Activated naive CD4-positive, alpha-beta T cell treated with anti-CD3 and anti-CD28 coated beads for 36 hours (primary cell): ENCODE measurements at regions of chr16 and their contacts with region 1.

Region 1: DNA sequence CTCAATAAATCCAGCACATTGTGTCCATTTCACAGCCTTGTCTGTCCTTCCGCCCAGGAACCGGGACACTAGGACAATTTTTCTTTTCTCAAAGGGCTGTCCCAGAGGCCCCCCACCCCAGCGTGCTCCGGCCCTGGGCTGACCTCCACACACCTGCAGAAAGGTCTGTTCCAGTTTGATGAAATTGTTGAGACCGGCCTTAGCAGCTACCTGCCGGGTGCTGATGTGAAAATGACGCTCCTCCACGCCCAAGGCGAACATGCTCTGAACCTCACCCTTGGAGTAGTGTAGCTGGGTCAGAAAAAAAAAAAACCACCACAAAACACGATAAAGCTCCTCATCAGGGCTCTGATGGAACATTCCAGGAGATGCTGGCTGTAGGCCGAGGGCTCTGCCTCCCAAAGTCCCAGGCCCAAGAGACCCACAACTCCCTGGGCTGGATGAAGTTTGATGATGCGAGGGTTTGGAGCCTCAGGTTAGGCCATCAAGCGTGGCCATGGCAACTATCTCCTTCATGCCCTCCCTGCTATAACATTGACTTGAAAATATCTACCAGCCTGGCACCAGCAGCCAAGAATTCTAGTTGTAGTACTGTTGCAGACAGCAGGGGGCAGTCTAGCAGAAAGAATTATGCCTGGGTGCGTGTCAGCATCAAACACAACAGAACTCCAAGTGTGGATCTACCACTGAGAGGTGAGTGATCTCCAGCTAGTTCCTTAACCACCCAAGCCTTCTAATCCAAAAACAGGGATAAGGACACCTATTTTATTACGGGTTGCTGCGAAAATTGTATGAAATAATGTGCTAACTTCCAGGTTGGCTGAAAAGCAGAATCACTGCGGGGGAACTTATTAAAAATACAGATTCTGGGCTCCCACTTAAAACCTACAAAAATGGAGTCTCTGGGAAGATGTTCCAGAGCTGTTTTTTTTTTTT is 62.1 kb downstream of the RMI2 start:
- DNase-seq: peak; percentile 86
- H3K4me3 Mint-ChIP-seq: no peak overlapping the region
- H3K27ac Mint-ChIP-seq: no peak overlapping the region
- H3K4me1 Mint-ChIP-seq: peaks cover 2% of the 10 kb centered on the region
- H3K27me3 Mint-ChIP-seq: no peaks in the 10 kb centered on the region

Region 2: DNA sequence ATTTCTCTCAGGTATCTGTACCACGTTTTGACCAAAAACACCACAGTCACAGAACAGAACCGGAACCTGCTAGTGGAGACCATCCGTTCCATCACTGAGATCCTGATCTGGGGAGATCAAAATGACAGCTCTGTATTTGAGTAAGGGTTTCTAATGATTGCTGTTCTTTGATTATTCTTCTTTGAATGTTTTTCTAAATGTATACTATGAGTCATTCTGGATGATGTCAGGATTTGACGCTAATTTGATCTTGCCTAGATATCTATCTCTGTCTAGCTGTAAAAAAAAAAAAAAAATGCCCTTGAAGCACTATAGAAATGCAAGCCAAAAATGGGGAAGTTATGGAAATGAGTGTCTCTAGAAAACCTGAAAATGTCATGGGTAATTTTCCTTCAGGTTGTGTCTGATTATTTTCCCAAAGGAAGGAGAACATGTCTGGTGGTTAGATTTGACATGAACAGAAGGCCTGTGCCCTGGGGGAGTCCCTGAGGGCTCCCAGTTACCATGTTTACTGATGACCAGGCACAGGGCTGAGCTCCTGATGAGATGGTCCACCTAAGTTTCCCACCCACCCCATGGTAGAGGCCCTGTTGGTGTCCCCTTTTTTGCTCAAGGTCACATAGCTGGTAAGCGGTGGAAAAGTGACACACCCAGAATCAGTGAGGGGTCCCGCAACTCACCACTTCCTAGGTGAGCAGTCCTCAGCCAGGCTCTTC is 449.4 kb before region 1 on chr16:
- CTCF ChIA-PET with region 1: interaction called, 37 read pairs
- intact Hi-C with region 1: loop called (anchors 1 kb)
- DNase-seq: peak; percentile 57
- H3K4me3 Mint-ChIP-seq: no peak overlapping the region
- H3K27ac Mint-ChIP-seq: peak overlapping the region; percentile 82
- H3K4me1 Mint-ChIP-seq: peaks cover 37% of the 10 kb centered on the region
- H3K27me3 Mint-ChIP-seq: no peaks in the 10 kb centered on the region

Region 3: DNA sequence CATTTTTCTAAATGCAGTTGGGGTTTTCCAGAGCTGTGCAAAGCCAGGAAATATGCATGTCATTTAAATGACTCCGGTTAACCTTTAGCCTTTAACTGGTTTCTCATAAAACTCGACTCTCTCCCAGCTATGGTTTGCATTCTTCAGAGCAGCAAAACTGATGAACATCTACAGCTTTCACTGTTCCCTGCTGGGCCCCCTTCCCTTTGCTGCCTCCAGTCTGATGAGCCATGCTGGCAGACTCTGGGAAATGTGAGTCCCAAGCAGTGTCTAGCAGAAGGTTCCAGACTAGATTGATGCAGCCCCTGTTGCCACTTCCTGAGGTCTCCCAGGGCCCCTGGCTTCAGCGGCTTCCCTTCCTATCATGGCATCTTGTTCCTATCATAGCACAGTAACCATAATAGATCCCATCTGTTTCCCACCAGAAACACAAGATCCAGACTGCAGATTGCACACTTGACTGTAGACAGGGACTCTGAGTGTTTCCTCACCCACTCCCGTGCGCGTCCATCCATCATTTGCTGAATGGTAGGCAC is 327.6 kb before region 1 on chr16:
- CTCF ChIA-PET with region 1: no interaction called
- intact Hi-C with region 1: no loop called
- DNase-seq: peak; percentile 74
- H3K4me3 Mint-ChIP-seq: peak overlapping the region; percentile 36
- H3K27ac Mint-ChIP-seq: peak overlapping the region; percentile 96
- H3K4me1 Mint-ChIP-seq: peaks cover 61% of the 10 kb centered on the region
- H3K27me3 Mint-ChIP-seq: no peaks in the 10 kb centered on the region

Region 4: GRCh38 chr16:11297492-11298142 is 109.7 kb before region 1 on chr16:
- CTCF ChIA-PET with region 1: no interaction called
- intact Hi-C with region 1: no loop called
- DNase-seq: peak; percentile 78
- H3K4me3 Mint-ChIP-seq: peak overlapping the region; percentile 49
- H3K27ac Mint-ChIP-seq: peak overlapping the region; percentile 0
- H3K4me1 Mint-ChIP-seq: peaks cover 27% of the 10 kb centered on the region
- H3K27me3 Mint-ChIP-seq: no peaks in the 10 kb centered on the region

Region 5: GRCh38 chr16:11396241-11397048 is 10.9 kb before region 1 on chr16:
- CTCF ChIA-PET with region 1: interaction called, 52 read pairs
- intact Hi-C with region 1: no loop called
- DNase-seq: peak; percentile 77
- H3K4me3 Mint-ChIP-seq: no peak overlapping the region
- H3K27ac Mint-ChIP-seq: no peak overlapping the region
- H3K4me1 Mint-ChIP-seq: no peaks in the 10 kb centered on the region
- H3K27me3 Mint-ChIP-seq: no peaks in the 10 kb centered on the region

Region 6: GRCh38 chr16:11431915-11432465 is 24.7 kb after region 1 on chr16:
- CTCF ChIA-PET with region 1: interaction called, 13 read pairs
- intact Hi-C with region 1: no loop called
- DNase-seq: no peak
- H3K4me3 Mint-ChIP-seq: no peak overlapping the region
- H3K27ac Mint-ChIP-seq: no peak overlapping the region
- H3K4me1 Mint-ChIP-seq: no peaks in the 10 kb centered on the region
- H3K27me3 Mint-ChIP-seq: no peaks in the 10 kb centered on the region

Region 7: DNA sequence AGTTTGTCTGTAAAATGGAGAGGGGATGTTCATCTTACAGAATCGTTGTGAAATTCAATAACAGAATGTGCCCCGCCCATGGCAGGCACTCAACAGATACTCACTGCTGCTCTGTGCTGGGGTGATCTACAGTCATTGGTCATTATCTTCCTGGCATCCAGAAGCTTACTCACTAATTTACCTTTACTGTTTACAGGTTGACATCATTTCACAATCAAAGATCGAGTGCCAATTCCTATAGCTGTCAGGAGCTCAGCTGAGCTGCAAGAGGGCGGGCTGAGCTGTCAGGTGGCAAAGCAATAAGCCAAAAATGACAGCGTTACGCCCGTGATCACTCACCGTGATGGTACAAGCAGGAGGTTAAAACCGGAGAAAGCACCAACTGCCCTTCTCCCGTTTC is 128.2 kb after region 1 on chr16:
- CTCF ChIA-PET with region 1: interaction called, 26 read pairs
- intact Hi-C with region 1: loop called (anchors 1 kb)
- DNase-seq: no peak
- H3K4me3 Mint-ChIP-seq: no peak overlapping the region
- H3K27ac Mint-ChIP-seq: no peak overlapping the region
- H3K4me1 Mint-ChIP-seq: peaks cover 13% of the 10 kb centered on the region
- H3K27me3 Mint-ChIP-seq: no peaks in the 10 kb centered on the region

Region 8: GRCh38 chr16:11715246-11715947 is 308.1 kb after region 1 on chr16:
- CTCF ChIA-PET with region 1: interaction called, 7 read pairs
- intact Hi-C with region 1: loop called (anchors 1 kb)
- DNase-seq: no peak
- H3K4me3 Mint-ChIP-seq: no peak overlapping the region
- H3K27ac Mint-ChIP-seq: no peak overlapping the region
- H3K4me1 Mint-ChIP-seq: peaks cover 6% of the 10 kb centered on the region
- H3K27me3 Mint-ChIP-seq: no peaks in the 10 kb centered on the region

Region 9: GRCh38 chr16:12067714-12068401 is 660.5 kb after region 1 on chr16:
- CTCF ChIA-PET with region 1: interaction called, 4 read pairs
- intact Hi-C with region 1: loop called (anchors 5 kb)
- DNase-seq: peak; percentile 83
- H3K4me3 Mint-ChIP-seq: no peak overlapping the region
- H3K27ac Mint-ChIP-seq: no peak overlapping the region
- H3K4me1 Mint-ChIP-seq: no peaks in the 10 kb centered on the region
- H3K27me3 Mint-ChIP-seq: no peaks in the 10 kb centered on the region